ENCODE measurements at regions of chr1 and their contacts with region 1.

Region 1: GRCh38 chr1:185559684-185560331 is 174.4 kb upstream of the HMCN1 start:
- DNase-seq: peak; percentile 90
- ATAC-seq: peak; percentile 89
- H3K4me3 Mint-ChIP-seq: peak overlapping the region; percentile 58
- H3K27ac Mint-ChIP-seq: peak overlapping the region; percentile 92
- H3K4me1 Mint-ChIP-seq: peaks cover 55% of the 10 kb centered on the region
- H3K27me3 Mint-ChIP-seq: no peaks in the 10 kb centered on the region

Region 2: DNA sequence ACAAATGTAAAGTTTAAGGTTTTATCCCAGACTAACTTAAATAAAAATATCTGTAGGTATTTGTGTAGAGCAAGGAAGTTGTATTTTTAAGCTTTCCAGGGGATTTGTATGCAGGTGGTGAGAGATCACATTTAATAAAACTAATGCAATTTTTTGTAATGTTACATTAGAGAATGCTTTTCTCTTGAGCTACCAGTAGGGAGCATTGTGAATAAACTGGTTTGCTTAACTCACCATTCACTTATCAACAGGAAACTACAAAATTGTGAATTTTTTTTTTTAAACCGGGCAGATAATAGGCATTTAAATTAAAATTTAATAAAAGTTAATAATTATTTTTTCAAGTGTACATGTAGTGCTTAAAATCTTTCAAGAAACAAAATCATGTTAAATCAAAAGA is 321.4 kb before region 1 on chr1:
- CTCF ChIA-PET with region 1: interaction called, 13 read pairs
- POLR2A ChIA-PET with region 1: no interaction called
- DNase-seq: no peak
- ATAC-seq: no peak
- H3K4me3 Mint-ChIP-seq: no peak overlapping the region
- H3K27ac Mint-ChIP-seq: no peak overlapping the region
- H3K4me1 Mint-ChIP-seq: peaks cover 17% of the 10 kb centered on the region
- H3K27me3 Mint-ChIP-seq: no peaks in the 10 kb centered on the region

Region 3: DNA sequence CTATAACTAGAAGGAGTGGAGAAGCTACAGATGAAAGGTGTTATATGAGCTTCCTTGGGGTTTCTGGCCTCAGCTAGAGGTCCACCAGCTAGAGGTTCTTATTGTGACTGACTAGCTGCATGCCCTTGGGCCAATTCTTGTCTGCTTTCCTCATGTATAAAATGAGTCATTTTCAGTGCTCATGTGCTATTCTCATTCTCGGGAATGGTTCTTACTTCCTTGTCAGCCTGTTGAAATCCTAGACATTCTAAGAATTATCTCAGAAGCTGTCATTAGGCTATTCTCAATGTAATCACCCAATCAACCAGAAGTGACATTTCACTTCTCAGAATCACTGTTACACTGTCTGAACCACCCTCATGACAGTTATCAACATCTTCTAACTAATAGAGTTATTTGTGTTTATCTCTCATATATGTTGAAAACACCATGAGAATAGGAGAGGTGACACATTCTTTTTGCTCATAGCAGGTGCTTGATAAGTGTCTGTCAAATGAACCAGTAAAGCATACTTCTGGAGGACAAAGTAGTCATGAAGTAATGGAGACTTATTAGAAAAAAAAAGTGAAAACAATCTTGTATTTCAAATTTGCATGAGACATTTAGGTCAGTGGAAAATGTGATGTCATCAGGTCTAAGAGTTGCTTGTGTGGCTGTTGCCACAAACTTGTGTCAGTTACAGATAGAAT is 119.9 kb before region 1 on chr1:
- CTCF ChIA-PET with region 1: interaction called, 10 read pairs
- POLR2A ChIA-PET with region 1: interaction called, 15 read pairs
- DNase-seq: peak; percentile 72
- ATAC-seq: peak; percentile 83
- H3K4me3 Mint-ChIP-seq: no peak overlapping the region
- H3K27ac Mint-ChIP-seq: no peak overlapping the region
- H3K4me1 Mint-ChIP-seq: peaks cover 36% of the 10 kb centered on the region
- H3K27me3 Mint-ChIP-seq: no peaks in the 10 kb centered on the region

Region 4: DNA sequence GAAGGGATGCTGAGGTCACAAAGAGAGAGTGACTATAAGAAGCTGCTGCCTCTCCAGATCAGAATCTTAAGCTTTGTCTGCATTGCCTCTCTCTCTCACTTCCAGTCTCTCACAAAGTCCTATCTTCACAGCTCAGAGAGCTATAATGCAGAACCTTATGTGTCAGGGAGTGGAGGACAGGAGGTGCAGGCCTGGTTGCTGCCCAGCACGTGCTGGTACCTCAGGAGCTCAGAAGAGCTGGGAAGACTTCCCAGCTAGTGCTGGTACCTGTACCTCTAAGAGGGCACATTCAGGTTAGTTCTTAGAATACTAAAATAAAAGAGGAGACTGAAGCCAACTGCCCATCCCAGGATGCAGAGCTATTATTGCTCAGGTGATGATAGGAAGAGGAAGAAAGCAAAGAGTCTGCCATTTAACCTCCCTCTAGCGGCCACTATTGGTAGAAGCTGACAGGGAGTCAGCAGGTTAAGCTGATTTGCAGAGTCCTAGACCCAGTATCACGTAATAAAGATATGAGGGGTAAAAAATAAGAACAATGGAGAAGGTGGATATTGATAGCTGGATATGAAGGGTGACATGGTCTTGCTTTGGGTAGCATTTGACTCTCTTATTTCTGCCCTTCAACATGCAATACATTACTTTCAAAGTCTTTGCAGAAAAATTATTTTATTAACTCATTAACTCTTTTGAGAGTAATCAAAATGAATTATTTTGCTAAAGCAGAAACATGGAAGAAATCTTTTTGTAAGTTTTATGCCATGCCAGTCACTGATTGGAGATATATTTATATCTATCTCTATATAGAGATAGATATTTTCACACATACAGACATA is 36.2 kb after region 1 on chr1:
- CTCF ChIA-PET with region 1: interaction called, 33 read pairs
- POLR2A ChIA-PET with region 1: interaction called, 4 read pairs
- DNase-seq: peak; percentile 60
- ATAC-seq: peak; percentile 76
- H3K4me3 Mint-ChIP-seq: no peak overlapping the region
- H3K27ac Mint-ChIP-seq: no peak overlapping the region
- H3K4me1 Mint-ChIP-seq: peaks cover 27% of the 10 kb centered on the region
- H3K27me3 Mint-ChIP-seq: no peaks in the 10 kb centered on the region

Region 5: DNA sequence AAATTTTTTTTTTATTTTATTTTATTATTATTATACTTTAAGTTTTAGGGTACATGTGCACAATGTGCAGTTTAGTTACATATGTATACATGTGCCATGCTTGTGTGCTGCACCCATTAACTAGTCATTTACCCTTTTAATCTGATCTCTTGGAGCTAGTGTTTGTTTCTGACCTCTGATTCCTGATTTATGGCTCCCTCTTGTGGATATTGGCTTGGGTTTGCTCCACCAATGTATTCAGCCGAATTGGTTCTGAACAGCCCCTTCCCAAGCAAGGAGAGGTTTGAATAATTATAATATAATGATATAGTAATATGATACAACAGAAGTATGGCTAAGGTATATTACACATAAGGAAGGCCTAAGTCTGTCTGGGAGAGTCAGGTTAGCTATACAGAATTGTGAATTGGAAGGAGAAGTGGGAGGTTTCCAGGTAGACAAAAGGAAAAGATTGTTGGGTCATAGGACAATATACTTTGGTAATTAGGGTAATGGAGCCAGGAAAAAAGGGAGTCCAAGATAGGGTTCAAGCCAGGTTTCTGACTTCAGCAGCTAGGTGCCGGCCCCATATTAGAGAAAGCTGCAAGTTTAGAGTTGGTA is 121.3 kb after region 1 on chr1:
- CTCF ChIA-PET with region 1: interaction called, 32 read pairs
- POLR2A ChIA-PET with region 1: no interaction called
- DNase-seq: peak; percentile 54
- ATAC-seq: peak; percentile 67
- H3K4me3 Mint-ChIP-seq: no peak overlapping the region
- H3K27ac Mint-ChIP-seq: no peak overlapping the region
- H3K4me1 Mint-ChIP-seq: peaks cover 28% of the 10 kb centered on the region
- H3K27me3 Mint-ChIP-seq: peaks cover 6% of the 10 kb centered on the region

Region 6: DNA sequence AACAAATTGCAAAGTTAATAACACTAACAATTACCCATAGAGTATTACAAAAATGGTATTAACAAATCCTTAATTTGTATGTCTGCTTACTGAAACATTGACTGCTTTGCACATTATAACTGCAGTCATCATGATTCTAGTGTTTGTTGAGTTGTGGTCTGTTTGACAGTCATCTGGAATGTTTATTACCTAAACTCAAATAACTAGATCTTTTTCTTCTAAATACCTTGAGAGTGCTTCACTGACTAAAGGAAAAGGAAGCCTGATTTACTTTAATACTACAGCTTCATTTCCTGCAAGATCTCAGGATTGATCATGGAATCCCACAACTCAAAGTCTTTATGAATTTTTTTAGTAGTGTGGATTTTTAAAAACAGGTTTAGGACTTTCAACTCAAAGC is 244.4 kb after region 1 on chr1:
- CTCF ChIA-PET with region 1: no interaction called
- POLR2A ChIA-PET with region 1: no interaction called
- DNase-seq: no peak
- ATAC-seq: no peak
- H3K4me3 Mint-ChIP-seq: no peak overlapping the region
- H3K27ac Mint-ChIP-seq: no peak overlapping the region
- H3K4me1 Mint-ChIP-seq: no peaks in the 10 kb centered on the region
- H3K27me3 Mint-ChIP-seq: peaks cover 10% of the 10 kb centered on the region